CD4-positive, alpha-beta memory T cell (primary cell): ENCODE measurements at regions of chr19 and their contacts with region 1.

Region 1: DNA sequence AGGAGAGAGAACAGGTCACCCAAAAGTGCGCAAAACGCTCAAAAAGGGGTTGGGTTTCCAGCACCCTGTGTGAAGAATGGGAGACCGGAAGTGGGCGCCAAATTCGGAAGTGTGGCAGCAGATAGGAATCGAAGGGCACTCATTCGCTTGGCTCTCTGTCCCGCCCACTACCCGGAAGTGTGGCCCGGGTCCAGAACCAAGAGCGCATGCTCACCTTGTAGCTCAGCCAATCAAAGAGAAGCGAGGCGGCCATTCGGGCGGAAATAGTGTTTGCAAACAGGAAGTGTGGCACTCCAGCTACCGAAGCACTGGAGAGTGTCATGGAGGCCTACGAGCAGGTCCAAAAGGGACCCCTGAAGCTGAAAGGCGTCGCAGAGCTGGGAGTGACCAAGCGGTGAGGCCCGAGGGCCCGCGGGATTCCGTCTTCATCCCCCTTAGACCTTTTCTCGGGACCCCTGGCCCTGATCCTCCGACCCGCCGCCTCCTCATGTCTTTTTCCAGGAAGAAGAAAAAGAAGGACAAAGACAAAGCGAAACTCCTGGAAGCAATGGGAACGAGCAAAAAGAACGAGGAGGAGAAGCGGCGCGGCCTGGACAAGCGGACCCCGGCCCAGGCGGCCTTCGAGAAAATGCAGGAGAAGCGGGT is at the start of gene FAM32A:
- DNase-seq: peak; percentile 98 to 99 (median 99)
- H3K4me3 ChIP-seq: peak within 1 kb of the TSS; percentile 84 to 86
- H3K4me3 Mint-ChIP-seq: peak within 1 kb of the TSS; percentile 97 to 100 (median 99)
- H3K27ac ChIP-seq: peak within 1 kb of the TSS; percentile 83
- H3K27ac Mint-ChIP-seq: peak within 1 kb of the TSS; percentile 95 to 99 (median 96)
- H3K4me1 ChIP-seq: peaks cover 43% of the 10 kb centered on the region
- H3K4me1 Mint-ChIP-seq: peaks cover 20 to 43% (median 31%) of the 10 kb centered on the region in 4 donors
- H3K27me3 ChIP-seq: no peaks in the 10 kb centered on the region
- H3K27me3 Mint-ChIP-seq: peaks cover 0 to 2% of the 10 kb centered on the region in 2 donors
- total RNA-seq, gene FAM32A: 50.9 to 51.7 TPM

Region 2: DNA sequence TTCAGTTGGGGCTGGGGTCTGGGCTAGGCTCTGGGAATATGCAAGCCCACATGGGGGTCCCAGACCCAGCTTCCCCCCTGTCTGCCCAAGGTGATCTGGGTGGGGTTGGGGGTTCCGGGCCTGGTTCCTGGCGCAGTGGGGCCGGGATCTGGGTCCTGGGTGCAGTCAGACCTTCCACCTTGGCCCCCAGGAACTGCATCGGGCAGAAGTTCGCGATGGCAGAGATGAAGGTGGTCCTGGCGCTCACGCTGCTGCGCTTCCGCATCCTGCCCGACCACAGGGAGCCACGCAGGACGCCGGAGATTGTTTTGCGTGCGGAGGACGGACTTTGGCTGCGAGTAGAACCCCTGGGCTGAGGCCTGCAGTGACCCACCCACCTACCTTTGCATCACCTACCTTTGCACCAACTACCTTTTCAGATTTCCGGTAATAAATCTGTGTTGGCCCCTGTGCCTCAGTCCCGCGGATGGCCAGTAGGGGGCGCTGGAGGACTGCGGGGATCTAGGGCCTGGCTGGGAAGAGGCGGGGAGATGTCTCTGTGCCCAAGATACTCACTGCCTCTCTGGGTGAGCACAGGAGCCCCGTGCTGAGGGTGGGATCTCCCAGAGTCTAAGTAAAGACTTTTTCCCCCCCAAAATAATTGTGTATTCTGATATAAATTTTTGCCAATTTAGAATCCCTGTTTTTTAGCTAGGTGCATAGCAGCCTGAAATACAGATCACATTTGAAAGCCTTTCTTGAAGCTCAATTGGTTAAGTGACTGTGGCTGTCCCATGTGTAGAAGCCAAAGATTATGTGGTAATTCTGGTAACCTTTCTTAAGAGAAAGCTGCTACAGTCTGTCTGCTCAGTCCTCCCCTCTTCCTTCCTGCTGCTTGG is 556.0 kb before region 1 on chr19:
- CTCF ChIA-PET with region 1: interaction called, 9 read pairs
- POLR2A ChIA-PET with region 1: no interaction called
- intact Hi-C with region 1: loop called (anchors 1 kb)
- DNase-seq: peak; percentile 80 to 86 (median 81)
- H3K4me3 ChIP-seq: no peak overlapping the region
- H3K4me3 Mint-ChIP-seq: no peak overlapping the region
- H3K27ac ChIP-seq: no peak overlapping the region
- H3K27ac Mint-ChIP-seq: no peak overlapping the region
- H3K4me1 ChIP-seq: peaks cover 14% of the 10 kb centered on the region
- H3K4me1 Mint-ChIP-seq: peaks cover 2 to 13% (median 9%) of the 10 kb centered on the region in 4 donors
- H3K27me3 ChIP-seq: no peaks in the 10 kb centered on the region
- H3K27me3 Mint-ChIP-seq: peaks cover 3 to 14% of the 10 kb centered on the region in 2 donors

Region 3: DNA sequence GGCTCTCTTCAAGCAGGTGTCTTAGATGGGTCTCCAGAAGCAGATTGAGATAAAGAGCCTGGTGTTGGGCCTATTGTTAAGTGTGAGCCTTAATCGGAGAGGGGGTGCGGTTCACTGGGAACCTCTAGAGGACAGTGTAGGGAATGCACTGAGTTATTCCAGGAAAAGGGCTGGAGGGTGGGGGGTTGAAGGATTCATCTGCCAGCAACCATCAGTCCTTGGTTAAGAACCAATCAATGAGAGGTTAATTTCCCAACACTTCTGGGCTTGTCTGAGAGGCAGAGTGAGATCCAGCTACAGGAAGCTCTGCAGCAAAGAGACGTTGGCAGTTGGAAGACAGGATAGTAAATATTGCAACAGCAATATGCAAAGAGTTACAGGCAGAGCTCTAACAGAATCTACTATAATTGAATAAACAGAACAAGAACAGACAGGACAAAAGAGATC is 316.1 kb before region 1 on chr19:
- CTCF ChIA-PET with region 1: no interaction called
- POLR2A ChIA-PET with region 1: no interaction called
- intact Hi-C with region 1: loop called (anchors 1 kb)
- DNase-seq: peak in 4 of 5 donors; percentile 26 to 49 (median 36)
- H3K4me3 ChIP-seq: no peak overlapping the region
- H3K4me3 Mint-ChIP-seq: no peak overlapping the region
- H3K27ac ChIP-seq: no peak overlapping the region
- H3K27ac Mint-ChIP-seq: peak overlapping the region in 3 of 7 donors; percentile 17 to 77 (median 60)
- H3K4me1 ChIP-seq: peaks cover 7% of the 10 kb centered on the region
- H3K4me1 Mint-ChIP-seq: peaks cover 4 to 19% (median 6%) of the 10 kb centered on the region in 4 donors
- H3K27me3 ChIP-seq: no peaks in the 10 kb centered on the region
- H3K27me3 Mint-ChIP-seq: peaks cover 4 to 18% of the 10 kb centered on the region in 2 donors

Region 4: GRCh38 chr19:16062789-16063188 is 122.5 kb before region 1 on chr19:
- CTCF ChIA-PET with region 1: interaction called, 38 read pairs
- POLR2A ChIA-PET with region 1: no interaction called
- intact Hi-C with region 1: loop called (anchors 1 kb)
- DNase-seq: peak; percentile 62 to 73 (median 67)
- H3K4me3 ChIP-seq: no peak overlapping the region
- H3K4me3 Mint-ChIP-seq: no peak overlapping the region
- H3K27ac ChIP-seq: no peak overlapping the region
- H3K27ac Mint-ChIP-seq: peak overlapping the region in 4 of 7 donors; percentile 15 to 56 (median 34)
- H3K4me1 ChIP-seq: peaks cover 12% of the 10 kb centered on the region
- H3K4me1 Mint-ChIP-seq: peaks cover 13 to 22% (median 19%) of the 10 kb centered on the region in 4 donors
- H3K27me3 ChIP-seq: no peaks in the 10 kb centered on the region
- H3K27me3 Mint-ChIP-seq: no peaks in the 10 kb centered on the region

Region 5: GRCh38 chr19:16111160-16111908 is 73.9 kb before region 1 on chr19 and contains the start of gene RAB8A:
- CTCF ChIA-PET with region 1: interaction called, 15 read pairs
- POLR2A ChIA-PET with region 1: interaction called, 15 read pairs
- intact Hi-C with region 1: loop called (anchors 1 kb)
- DNase-seq: peak; percentile 99 to 100 (median 99)
- H3K4me3 ChIP-seq: peak within 1 kb of the TSS; percentile 78 to 86
- H3K4me3 Mint-ChIP-seq: peak within 1 kb of the TSS; percentile 96 to 99 (median 98)
- H3K27ac ChIP-seq: peak within 1 kb of the TSS; percentile 94
- H3K27ac Mint-ChIP-seq: peak within 1 kb of the TSS; percentile 96 to 99 (median 98)
- H3K4me1 ChIP-seq: peaks cover 46% of the 10 kb centered on the region
- H3K4me1 Mint-ChIP-seq: peaks cover 20 to 50% (median 37%) of the 10 kb centered on the region in 4 donors
- H3K27me3 ChIP-seq: no peaks in the 10 kb centered on the region
- H3K27me3 Mint-ChIP-seq: no peaks in the 10 kb centered on the region
- total RNA-seq, gene RAB8A: 85.5 to 86.9 TPM

Region 6: GRCh38 chr19:16309643-16310042 is 124.4 kb after region 1 on chr19:
- CTCF ChIA-PET with region 1: no interaction called
- POLR2A ChIA-PET with region 1: no interaction called
- intact Hi-C with region 1: no loop called
- DNase-seq: no peak
- H3K4me3 ChIP-seq: no peak overlapping the region
- H3K4me3 Mint-ChIP-seq: no peak overlapping the region
- H3K27ac ChIP-seq: no peak overlapping the region
- H3K27ac Mint-ChIP-seq: peak overlapping the region in 1 of 7 donors; percentile 57
- H3K4me1 ChIP-seq: no peaks in the 10 kb centered on the region
- H3K4me1 Mint-ChIP-seq: peaks cover 0 to 2% (median 0%) of the 10 kb centered on the region in 4 donors
- H3K27me3 ChIP-seq: no peaks in the 10 kb centered on the region
- H3K27me3 Mint-ChIP-seq: no peaks in the 10 kb centered on the region

Region 7: GRCh38 chr19:16324384-16325160 is 139.3 kb after region 1 on chr19 and contains the start of gene KLF2:
- CTCF ChIA-PET with region 1: no interaction called
- POLR2A ChIA-PET with region 1: interaction called, 12 read pairs
- intact Hi-C with region 1: no loop called
- DNase-seq: peak; percentile 95 to 98 (median 96)
- H3K4me3 ChIP-seq: peak within 1 kb of the TSS; percentile 38 to 100
- H3K4me3 Mint-ChIP-seq: peak within 1 kb of the TSS; percentile 79 to 87 (median 83)
- H3K27ac ChIP-seq: peak within 1 kb of the TSS; percentile 95
- H3K27ac Mint-ChIP-seq: peak within 1 kb of the TSS; percentile 96 to 99 (median 98)
- H3K4me1 ChIP-seq: peaks cover 34% of the 10 kb centered on the region
- H3K4me1 Mint-ChIP-seq: peaks cover 15 to 64% (median 31%) of the 10 kb centered on the region in 4 donors
- H3K27me3 ChIP-seq: no peaks in the 10 kb centered on the region
- H3K27me3 Mint-ChIP-seq: peaks cover 0 to 7% of the 10 kb centered on the region in 2 donors
- total RNA-seq, gene KLF2: 425 to 437 TPM

Region 8: DNA sequence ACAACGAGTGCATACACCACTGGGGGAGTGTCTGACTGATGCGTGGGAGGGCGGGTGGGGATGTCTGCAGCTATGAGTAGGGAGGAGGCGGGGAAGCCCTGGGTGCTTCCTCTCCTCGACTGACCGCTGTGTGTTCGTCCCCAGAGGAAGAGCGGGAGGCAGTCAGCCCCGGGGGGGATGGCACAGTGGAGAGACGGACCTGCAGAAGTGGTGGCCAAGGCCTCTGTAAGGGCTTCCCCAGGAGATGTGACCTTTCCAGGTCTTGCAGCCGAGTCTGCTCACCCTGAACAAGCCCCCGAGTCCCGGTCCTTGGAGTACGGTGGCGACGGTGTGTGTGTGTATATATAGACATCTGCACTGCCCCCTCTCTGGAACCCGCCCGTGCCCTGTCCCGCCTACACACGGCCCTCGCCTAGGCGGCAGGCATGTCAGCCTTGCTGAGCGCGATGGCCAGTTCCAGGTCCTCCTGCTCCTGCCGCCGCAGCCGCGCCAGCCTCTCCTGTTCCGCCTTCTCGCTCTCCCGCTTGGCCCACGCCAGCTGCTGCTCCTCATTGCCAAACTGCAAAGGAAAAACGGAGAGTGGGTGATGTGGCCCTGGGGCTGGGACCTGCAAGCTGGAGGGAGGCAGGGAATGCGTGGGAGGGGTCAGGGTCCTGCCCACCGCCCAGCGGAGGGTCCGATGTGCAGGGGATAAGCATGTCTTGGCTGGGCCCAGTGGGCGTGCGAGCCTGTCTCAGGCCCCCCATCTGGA is 170.2 kb after region 1 on chr19:
- CTCF ChIA-PET with region 1: no interaction called
- POLR2A ChIA-PET with region 1: no interaction called
- intact Hi-C with region 1: no loop called
- DNase-seq: no peak
- H3K4me3 ChIP-seq: no peak overlapping the region
- H3K4me3 Mint-ChIP-seq: peak overlapping the region in 7 of 8 donors; percentile 58 to 82 (median 72)
- H3K27ac ChIP-seq: peak overlapping the region; percentile 30
- H3K27ac Mint-ChIP-seq: peak overlapping the region; percentile 68 to 92 (median 79)
- H3K4me1 ChIP-seq: peaks cover 81% of the 10 kb centered on the region
- H3K4me1 Mint-ChIP-seq: peaks cover 40 to 87% (median 68%) of the 10 kb centered on the region in 4 donors
- H3K27me3 ChIP-seq: no peaks in the 10 kb centered on the region
- H3K27me3 Mint-ChIP-seq: no peaks in the 10 kb centered on the region

Region 9: GRCh38 chr19:16495982-16496612 is 310.9 kb after region 1 on chr19 and contains the starts of genes C19orf44 and CALR3:
- CTCF ChIA-PET with region 1: no interaction called
- POLR2A ChIA-PET with region 1: no interaction called
- intact Hi-C with region 1: loop called (anchors 2 kb)
- DNase-seq: peak; percentile 96 to 97 (median 96)
- H3K4me3 ChIP-seq: peak within 1 kb of the TSS; percentile 65 to 75
- H3K4me3 Mint-ChIP-seq: peak within 1 kb of the TSS; percentile 89 to 95 (median 92)
- H3K27ac ChIP-seq: peak within 1 kb of the TSS; percentile 50
- H3K27ac Mint-ChIP-seq: peak within 1 kb of the TSS; percentile 79 to 97 (median 93)
- H3K4me1 ChIP-seq: peaks cover 10% of the 10 kb centered on the region
- H3K4me1 Mint-ChIP-seq: peaks cover 5 to 14% (median 9%) of the 10 kb centered on the region in 4 donors
- H3K27me3 ChIP-seq: no peaks in the 10 kb centered on the region
- H3K27me3 Mint-ChIP-seq: no peaks in the 10 kb centered on the region
- total RNA-seq, gene C19orf44: 4.6 to 6.7 TPM
- total RNA-seq, gene CALR3: not detected

Region 10: GRCh38 chr19:16509141-16510061 is 324.2 kb after region 1 on chr19:
- CTCF ChIA-PET with region 1: no interaction called
- POLR2A ChIA-PET with region 1: no interaction called
- intact Hi-C with region 1: no loop called
- DNase-seq: no peak
- H3K4me3 ChIP-seq: no peak overlapping the region
- H3K4me3 Mint-ChIP-seq: no peak overlapping the region
- H3K27ac ChIP-seq: no peak overlapping the region
- H3K27ac Mint-ChIP-seq: no peak overlapping the region
- H3K4me1 ChIP-seq: no peaks in the 10 kb centered on the region
- H3K4me1 Mint-ChIP-seq: peaks cover 0 to 1% (median 0%) of the 10 kb centered on the region in 4 donors
- H3K27me3 ChIP-seq: no peaks in the 10 kb centered on the region
- H3K27me3 Mint-ChIP-seq: no peaks in the 10 kb centered on the region